RWPE1 (cell line): ENCODE measurements at regions of chr5 and their contacts with region 1.

Region 1: DNA sequence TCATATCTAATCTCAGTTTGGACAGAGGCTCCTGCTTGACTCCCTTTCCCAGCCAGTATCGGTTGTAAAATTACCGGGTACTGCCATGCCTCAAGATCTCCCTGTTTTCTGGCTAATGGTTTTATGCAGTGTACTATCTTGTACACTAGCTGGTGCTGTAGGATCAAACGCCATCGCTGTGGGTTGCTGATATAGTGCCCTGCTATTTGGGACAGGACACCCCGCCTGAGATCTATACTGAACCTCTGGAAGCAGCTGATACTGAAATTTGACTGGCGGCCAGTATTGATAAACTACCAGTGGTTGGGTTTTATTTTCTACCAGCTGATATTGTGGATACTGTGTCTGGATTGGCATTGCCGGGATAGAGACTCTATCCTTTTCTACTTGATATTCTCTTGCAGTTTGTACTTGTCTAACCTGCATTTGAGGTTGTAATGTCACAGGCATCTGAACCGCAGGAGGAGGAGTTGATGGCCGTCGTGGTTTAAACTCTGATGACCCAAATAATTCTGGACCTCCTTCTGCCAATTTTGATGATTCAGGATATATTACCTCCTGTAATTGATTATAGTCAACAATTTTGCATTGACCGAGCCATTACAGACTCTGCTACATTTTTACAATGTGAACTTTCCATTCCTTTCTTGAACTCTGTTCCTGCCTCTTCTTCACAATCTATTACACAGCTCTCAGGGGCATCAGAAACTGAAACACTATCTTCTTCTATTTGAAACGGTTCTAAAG is 112.5 kb upstream of the LARP1 start:
- DNase-seq: no peak
- H3K27ac ChIP-seq: no peak overlapping the region
- CTCF ChIP-seq: peak; percentile 70

Region 2: GRCh38 chr5:154631141-154631540 is 11.5 kb before region 1 on chr5:
- CTCF ChIA-PET with region 1: interaction called, 11 read pairs
- POLR2A ChIA-PET with region 1: no interaction called
- DNase-seq: no peak
- H3K27ac ChIP-seq: no peak overlapping the region
- CTCF ChIP-seq: no peak

Region 3: GRCh38 chr5:154701110-154701572 is 58.5 kb after region 1 on chr5:
- CTCF ChIA-PET with region 1: no interaction called
- POLR2A ChIA-PET with region 1: no interaction called
- DNase-seq: no peak
- H3K27ac ChIP-seq: no peak overlapping the region
- CTCF ChIP-seq: no peak

Region 4: GRCh38 chr5:155229135-155229534 is 586.5 kb after region 1 on chr5:
- CTCF ChIA-PET with region 1: no interaction called
- POLR2A ChIA-PET with region 1: no interaction called
- DNase-seq: no peak
- H3K27ac ChIP-seq: no peak overlapping the region
- CTCF ChIP-seq: no peak